Endothelial cell of umbilical vein (primary cell): ENCODE measurements at regions of chr15 and their contacts with region 1.

Region 1: GRCh38 chr15:40857601-40858341 is 13.9 kb downstream of the SPINT1 start:
- DNase-seq: peak; percentile 67
- H3K4me3 ChIP-seq: no peak overlapping the region
- H3K27ac ChIP-seq: no peak overlapping the region
- H3K4me1 ChIP-seq: no peaks in the 10 kb centered on the region
- H3K27me3 ChIP-seq: no peaks in the 10 kb centered on the region
- CTCF ChIP-seq: peak; percentile 92 to 99
- POLR2A ChIP-seq: no peak

Region 2: GRCh38 chr15:40069178-40070165 is 788.3 kb before region 1 on chr15:
- CTCF ChIA-PET with region 1: no interaction called
- POLR2A ChIA-PET with region 1: no interaction called
- dilution Hi-C with region 1: no loop called
- intact Hi-C with region 1: no loop called
- DNase-seq: peak; percentile 88
- H3K4me3 ChIP-seq: no peak overlapping the region
- H3K27ac ChIP-seq: peak overlapping the region; percentile 25
- H3K4me1 ChIP-seq: peaks cover 19% of the 10 kb centered on the region
- H3K27me3 ChIP-seq: no peaks in the 10 kb centered on the region
- CTCF ChIP-seq: no peak
- POLR2A ChIP-seq: no peak

Region 3: GRCh38 chr15:40593588-40594428 is 264.0 kb before region 1 on chr15 and contains the start of gene KNL1:
- CTCF ChIA-PET with region 1: interaction called, 11 read pairs
- POLR2A ChIA-PET with region 1: no interaction called
- dilution Hi-C with region 1: no loop called
- intact Hi-C with region 1: no loop called
- DNase-seq: peak; percentile 100
- H3K4me3 ChIP-seq: peak within 1 kb of the TSS; percentile 52 to 99 (median 99)
- H3K27ac ChIP-seq: peak within 1 kb of the TSS; percentile 99
- H3K4me1 ChIP-seq: peaks cover 8% of the 10 kb centered on the region
- H3K27me3 ChIP-seq: peaks cover under 1 to 3% of the 10 kb centered on the region in 2 experiments
- CTCF ChIP-seq: no peak
- POLR2A ChIP-seq: peak; percentile 83
- total RNA-seq, gene KNL1: 31.8 and 33.8 TPM in 2 replicates

Region 4: GRCh38 chr15:40782580-40783227 is 75.1 kb before region 1 on chr15:
- CTCF ChIA-PET with region 1: interaction called, 21 read pairs
- POLR2A ChIA-PET with region 1: no interaction called
- dilution Hi-C with region 1: no loop called
- intact Hi-C with region 1: no loop called
- DNase-seq: peak; percentile 63
- H3K4me3 ChIP-seq: no peak overlapping the region
- H3K27ac ChIP-seq: no peak overlapping the region
- H3K4me1 ChIP-seq: peaks cover 11% of the 10 kb centered on the region
- H3K27me3 ChIP-seq: no peaks in the 10 kb centered on the region
- CTCF ChIP-seq: peak; percentile 61 to 88
- POLR2A ChIP-seq: no peak

Region 5: GRCh38 chr15:40830884-40831283 is 26.9 kb before region 1 on chr15:
- CTCF ChIA-PET with region 1: interaction called, 14 read pairs
- POLR2A ChIA-PET with region 1: no interaction called
- dilution Hi-C with region 1: no loop called
- intact Hi-C with region 1: no loop called
- DNase-seq: no peak
- H3K4me3 ChIP-seq: no peak overlapping the region
- H3K27ac ChIP-seq: no peak overlapping the region
- H3K4me1 ChIP-seq: no peaks in the 10 kb centered on the region
- H3K27me3 ChIP-seq: peaks cover 2 to 11% of the 10 kb centered on the region in 2 experiments
- CTCF ChIP-seq: no peak
- POLR2A ChIP-seq: no peak

Region 6: DNA sequence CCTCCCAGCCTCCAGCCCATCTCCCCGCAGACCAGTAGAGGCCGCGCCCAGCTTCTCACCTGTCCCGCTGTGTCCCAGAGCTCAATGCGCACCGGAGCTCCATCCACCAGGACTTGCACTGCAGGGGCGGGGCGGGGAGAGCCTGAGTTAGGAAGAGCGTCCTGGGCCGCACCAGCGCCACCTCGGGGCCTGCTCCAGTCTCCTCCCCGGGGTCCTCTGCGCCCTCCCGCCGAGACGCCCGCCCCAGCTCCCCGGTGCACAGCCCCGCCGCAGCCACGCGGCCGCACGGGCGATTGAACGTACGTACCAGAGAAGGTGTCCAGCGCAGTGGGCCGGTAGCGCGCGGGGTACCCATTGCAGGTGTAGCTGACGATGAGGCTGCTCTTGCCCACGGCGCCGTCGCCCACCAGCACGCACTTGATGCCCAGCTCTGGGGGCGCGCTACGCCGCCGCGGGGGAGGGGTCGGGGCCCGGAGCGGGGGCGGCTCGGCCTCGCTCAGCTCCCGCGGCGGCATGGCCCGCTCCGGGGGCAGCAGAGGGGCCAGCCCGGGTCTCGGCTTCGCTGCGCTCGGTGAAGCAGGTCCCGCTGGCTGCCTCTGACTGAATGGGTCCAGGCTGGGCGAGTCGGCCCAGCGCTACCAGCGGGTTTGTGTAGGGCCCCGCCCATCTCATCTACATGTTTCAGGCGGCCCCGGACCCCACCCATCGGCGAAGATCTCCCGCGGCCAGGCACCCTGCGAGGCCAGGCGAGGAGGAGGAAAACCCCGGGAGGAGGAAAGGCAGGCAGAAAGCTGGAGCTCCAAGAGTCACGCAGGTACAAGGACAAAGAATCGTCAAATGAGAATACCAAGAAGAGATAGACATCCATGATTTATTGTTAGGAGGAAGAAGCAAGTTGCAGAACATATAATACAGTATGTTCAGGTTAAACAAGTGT is 16.1 kb after region 1 on chr15 and contains the start of gene RHOV:
- CTCF ChIA-PET with region 1: interaction called, 146 read pairs
- POLR2A ChIA-PET with region 1: no interaction called
- dilution Hi-C with region 1: no loop called
- intact Hi-C with region 1: no loop called
- DNase-seq: peak; percentile 43
- H3K4me3 ChIP-seq: peak within 1 kb of the TSS; percentile 9 to 43 (median 25)
- H3K27ac ChIP-seq: no peak within 1 kb of the TSS
- H3K4me1 ChIP-seq: no peaks in the 10 kb centered on the region
- H3K27me3 ChIP-seq: no peaks in the 10 kb centered on the region
- CTCF ChIP-seq: peak; percentile 33 to 55
- POLR2A ChIP-seq: no peak
- total RNA-seq, gene RHOV: 0.18 and 0.20 TPM in 2 replicates

Region 7: GRCh38 chr15:40886586-40886985 is 28.8 kb after region 1 on chr15:
- CTCF ChIA-PET with region 1: interaction called, 38 read pairs
- POLR2A ChIA-PET with region 1: interaction called, 5 read pairs
- dilution Hi-C with region 1: no loop called
- intact Hi-C with region 1: no loop called
- DNase-seq: no peak
- H3K4me3 ChIP-seq: no peak overlapping the region
- H3K27ac ChIP-seq: no peak overlapping the region
- H3K4me1 ChIP-seq: no peaks in the 10 kb centered on the region
- H3K27me3 ChIP-seq: no peaks in the 10 kb centered on the region
- CTCF ChIP-seq: no peak
- POLR2A ChIP-seq: no peak

Region 8: GRCh38 chr15:41022487-41023090 is 164.8 kb after region 1 on chr15:
- CTCF ChIA-PET with region 1: interaction called, 16 read pairs
- POLR2A ChIA-PET with region 1: no interaction called
- dilution Hi-C with region 1: no loop called
- intact Hi-C with region 1: loop called (anchors 5 kb)
- DNase-seq: peak; percentile 80
- H3K4me3 ChIP-seq: no peak overlapping the region
- H3K27ac ChIP-seq: no peak overlapping the region
- H3K4me1 ChIP-seq: peaks cover 32% of the 10 kb centered on the region
- H3K27me3 ChIP-seq: no peaks in the 10 kb centered on the region
- CTCF ChIP-seq: peak; percentile 67 to 73
- POLR2A ChIP-seq: no peak

Region 9: DNA sequence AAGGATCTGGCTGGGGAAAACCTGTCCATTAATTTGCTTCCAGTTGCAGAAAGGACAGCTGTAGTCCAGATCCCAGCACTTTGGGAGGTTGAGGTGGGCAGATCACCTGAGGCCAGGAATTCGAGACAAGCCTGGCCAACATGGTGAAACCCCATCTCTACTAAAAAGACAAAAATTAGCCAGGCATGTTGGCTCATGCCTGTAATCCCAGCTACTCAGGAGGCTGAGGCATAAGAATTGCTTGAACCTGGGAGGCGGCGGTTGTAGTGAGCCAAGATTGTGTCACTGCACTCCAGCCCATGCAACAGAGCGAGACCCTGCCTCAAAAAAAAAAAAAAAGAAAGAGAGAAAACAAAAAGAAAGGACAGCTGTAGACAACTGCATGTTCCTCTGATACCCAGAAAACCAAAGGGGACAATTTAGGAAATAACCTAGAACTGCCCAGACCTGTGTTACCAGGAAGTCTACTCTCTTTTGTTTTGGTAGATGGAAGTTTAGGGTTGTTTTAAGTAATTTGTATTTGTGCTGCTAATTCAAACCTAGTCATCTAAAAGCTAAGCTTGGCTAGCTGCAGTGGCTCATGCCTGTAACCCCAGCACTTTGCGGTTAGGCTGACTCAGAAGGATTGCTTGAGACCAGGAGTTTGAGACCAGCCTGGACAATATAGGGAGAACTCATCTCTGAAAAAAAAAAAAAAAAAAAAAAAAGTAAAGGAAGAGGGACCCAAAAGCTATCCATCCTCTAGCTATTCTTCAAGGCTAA is 350.1 kb after region 1 on chr15:
- CTCF ChIA-PET with region 1: no interaction called
- POLR2A ChIA-PET with region 1: no interaction called
- dilution Hi-C with region 1: no loop called
- intact Hi-C with region 1: no loop called
- DNase-seq: no peak
- H3K4me3 ChIP-seq: no peak overlapping the region
- H3K27ac ChIP-seq: no peak overlapping the region
- H3K4me1 ChIP-seq: no peaks in the 10 kb centered on the region
- H3K27me3 ChIP-seq: peaks cover 0 to 4% of the 10 kb centered on the region in 2 experiments
- CTCF ChIP-seq: no peak
- POLR2A ChIP-seq: no peak